SK-N-SH (cell line): ENCODE measurements at regions of chr7 and their contacts with region 1.

Region 1: GRCh38 chr7:100691676-100692577 is 2.1 kb downstream of the GIGYF1 start:
- DNase-seq: peak; percentile 98
- H3K4me3 ChIP-seq: peak overlapping the region; percentile 66 to 87
- H3K27ac ChIP-seq: peak overlapping the region in 1 of 2 experiments; percentile 43; a peak in 2 of 4 replicates
- H3K4me1 ChIP-seq: peaks cover 18 to 23% of the 10 kb centered on the region in 2 experiments
- H3K27me3 ChIP-seq: no peaks in the 10 kb centered on the region
- CTCF ChIP-seq: peak; percentile 98
- EP300 ChIP-seq: no peak
- RAD21 ChIP-seq: peak; percentile 89

Region 2: DNA sequence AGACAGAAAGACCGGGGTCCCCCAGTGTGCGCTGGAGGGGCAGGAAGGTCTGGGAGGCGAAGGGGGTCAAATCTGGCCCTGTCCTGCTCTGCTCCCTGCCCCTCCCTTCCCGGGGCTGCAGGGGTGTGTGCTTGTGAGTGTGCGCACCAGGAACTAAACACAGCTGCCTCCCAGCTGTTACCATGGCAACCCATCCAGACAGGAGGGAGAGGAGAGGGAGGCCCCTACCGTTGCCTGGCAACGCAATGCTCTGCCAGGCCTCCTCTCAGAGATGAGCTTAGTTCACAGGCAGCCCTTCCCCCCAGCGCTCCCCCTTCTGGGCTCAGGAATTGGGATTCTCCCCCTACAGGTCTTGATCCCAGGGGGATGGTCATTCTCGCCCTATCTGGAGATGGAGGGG is 202.1 kb before region 1 on chr7:
- CTCF ChIA-PET with region 1: interaction called, 10 read pairs
- POLR2A ChIA-PET with region 1: no interaction called
- DNase-seq: peak; percentile 100
- H3K4me3 ChIP-seq: no peak overlapping the region
- H3K27ac ChIP-seq: peak overlapping the region in 1 of 2 experiments; percentile 78; a peak in 2 of 4 replicates
- H3K4me1 ChIP-seq: peaks cover 3 to 32% of the 10 kb centered on the region in 2 experiments; a peak in 2 of 4 replicates
- H3K27me3 ChIP-seq: no peaks in the 10 kb centered on the region
- CTCF ChIP-seq: no peak
- EP300 ChIP-seq: peak in 1 of 2 experiments; percentile 17; a peak in 1 of 4 replicates
- RAD21 ChIP-seq: 0 out of 2 replicates have a peak, but pooled peaks have one; percentile 14

Region 3: DNA sequence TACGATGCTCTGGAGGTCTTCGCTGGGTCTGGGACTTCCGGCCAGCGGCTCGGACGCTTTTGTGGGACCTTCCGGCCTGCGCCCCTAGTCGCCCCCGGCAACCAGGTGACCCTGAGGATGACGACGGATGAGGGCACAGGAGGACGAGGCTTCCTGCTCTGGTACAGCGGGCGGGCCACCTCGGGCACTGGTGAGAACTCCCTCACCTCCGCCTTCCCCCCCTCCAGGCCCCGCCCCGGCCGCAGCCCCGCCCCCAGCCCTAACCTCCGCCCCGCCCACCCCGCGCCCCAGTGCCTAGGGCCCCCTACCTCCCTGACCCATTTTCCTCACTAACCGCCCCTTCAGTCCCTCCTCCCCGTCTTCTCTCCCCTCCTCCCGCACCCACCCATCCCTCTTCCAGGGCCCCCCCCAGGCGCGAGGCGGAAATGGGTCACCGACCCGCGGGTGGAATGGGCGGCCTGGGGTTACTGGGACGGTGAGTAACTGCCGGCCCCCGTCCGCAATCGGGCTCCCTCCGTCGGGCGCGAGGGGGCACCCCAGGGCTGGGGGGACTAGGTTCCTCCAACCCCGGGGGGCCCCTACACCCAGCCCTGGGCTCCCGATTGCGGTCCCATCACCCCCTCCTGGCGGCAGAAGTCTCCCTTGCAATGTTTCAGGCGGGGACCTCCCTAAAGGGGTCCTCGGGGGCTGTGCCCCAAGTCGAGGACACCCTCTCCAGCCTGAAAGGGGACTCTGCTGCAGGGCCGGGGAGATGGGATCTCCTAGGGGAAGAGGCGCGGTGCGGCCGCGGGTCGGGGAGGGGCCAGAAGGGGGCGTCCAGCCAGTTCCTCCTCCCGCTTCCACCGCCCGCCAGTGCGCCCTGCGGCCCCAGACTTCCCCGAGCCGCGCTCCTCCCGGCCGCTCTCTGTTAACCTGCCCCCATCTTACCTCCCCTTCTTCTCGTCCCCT is 87.6 kb before region 1 on chr7:
- CTCF ChIA-PET with region 1: interaction called, 38 read pairs
- POLR2A ChIA-PET with region 1: no interaction called
- DNase-seq: peak; percentile 98
- H3K4me3 ChIP-seq: peak overlapping the region; percentile 67 to 76
- H3K27ac ChIP-seq: peak overlapping the region; percentile 69 to 97
- H3K4me1 ChIP-seq: peaks cover 10 to 25% of the 10 kb centered on the region in 2 experiments; a peak in 3 of 4 replicates
- H3K27me3 ChIP-seq: no peaks in the 10 kb centered on the region
- CTCF ChIP-seq: peak; percentile 59
- EP300 ChIP-seq: peak in 1 of 2 experiments; percentile 39; a peak in 1 of 4 replicates
- RAD21 ChIP-seq: no peak

Region 4: DNA sequence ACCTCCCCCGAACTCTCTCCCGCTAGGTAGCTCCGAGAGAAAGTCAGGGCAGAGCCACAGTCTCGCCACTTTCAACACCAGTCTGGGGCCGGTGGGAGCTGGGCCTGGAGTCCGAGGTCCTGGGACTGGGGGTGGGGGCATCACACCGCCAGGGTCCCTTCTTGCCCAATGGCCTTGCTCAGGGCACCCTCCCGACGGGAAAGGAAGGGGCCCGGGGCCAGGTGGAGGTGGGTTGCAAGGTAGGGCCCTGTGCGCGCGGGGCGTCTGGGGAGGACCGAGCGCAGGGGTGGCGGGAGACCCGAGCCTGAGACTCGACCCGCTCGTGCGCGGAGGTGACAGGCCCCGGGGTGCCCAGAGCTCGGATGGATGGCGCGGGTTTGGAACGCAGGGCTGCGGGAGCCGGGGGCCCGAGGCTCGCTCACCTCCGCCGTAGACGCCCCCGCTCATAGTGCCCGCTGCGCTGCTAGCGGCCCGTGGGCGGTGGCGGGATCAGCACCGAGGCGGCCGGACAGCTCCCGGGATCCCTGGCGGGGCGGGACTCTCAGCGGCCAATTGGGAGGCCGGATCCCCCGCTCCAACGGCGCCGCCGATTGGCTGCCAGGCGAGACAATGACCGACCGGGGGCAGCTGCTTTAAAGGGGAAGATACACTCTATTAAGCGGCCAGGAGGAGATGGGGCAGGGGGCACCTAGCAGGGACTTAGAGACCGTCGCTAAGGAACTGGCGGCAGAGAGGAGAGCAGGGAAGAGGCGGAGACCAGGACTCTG is 35.8 kb before region 1 on chr7 and contains the start of gene ACTL6B:
- CTCF ChIA-PET with region 1: interaction called, 36 read pairs
- POLR2A ChIA-PET with region 1: no interaction called
- DNase-seq: peak; percentile 100
- H3K4me3 ChIP-seq: peak within 1 kb of the TSS in 1 of 2 experiments; percentile 46; a peak in 2 of 4 replicates
- H3K27ac ChIP-seq: peak within 1 kb of the TSS in 1 of 2 experiments; percentile 40; a peak in 1 of 4 replicates
- H3K4me1 ChIP-seq: peaks cover 0 to 6% of the 10 kb centered on the region in 2 experiments; a peak in 1 of 4 replicates
- H3K27me3 ChIP-seq: peaks cover 17% of the 10 kb centered on the region; the same call in 1 of the 2 replicates
- CTCF ChIP-seq: no peak
- EP300 ChIP-seq: no peak
- RAD21 ChIP-seq: no peak
- polyA plus RNA-seq, gene ACTL6B: 0.67 and 0.93 TPM in 2 replicates

Region 5: GRCh38 chr7:100680167-100680575 is 11.8 kb before region 1 on chr7:
- CTCF ChIA-PET with region 1: interaction called, 227 read pairs
- POLR2A ChIA-PET with region 1: interaction called, 14 read pairs
- DNase-seq: peak; percentile 44
- H3K4me3 ChIP-seq: no peak overlapping the region
- H3K27ac ChIP-seq: no peak overlapping the region; a peak in 1 of 4 replicates
- H3K4me1 ChIP-seq: peaks cover 0 to 35% of the 10 kb centered on the region in 2 experiments; a peak in 1 of 4 replicates
- H3K27me3 ChIP-seq: no peaks in the 10 kb centered on the region
- CTCF ChIP-seq: no peak
- EP300 ChIP-seq: no peak
- RAD21 ChIP-seq: no peak

Region 6: DNA sequence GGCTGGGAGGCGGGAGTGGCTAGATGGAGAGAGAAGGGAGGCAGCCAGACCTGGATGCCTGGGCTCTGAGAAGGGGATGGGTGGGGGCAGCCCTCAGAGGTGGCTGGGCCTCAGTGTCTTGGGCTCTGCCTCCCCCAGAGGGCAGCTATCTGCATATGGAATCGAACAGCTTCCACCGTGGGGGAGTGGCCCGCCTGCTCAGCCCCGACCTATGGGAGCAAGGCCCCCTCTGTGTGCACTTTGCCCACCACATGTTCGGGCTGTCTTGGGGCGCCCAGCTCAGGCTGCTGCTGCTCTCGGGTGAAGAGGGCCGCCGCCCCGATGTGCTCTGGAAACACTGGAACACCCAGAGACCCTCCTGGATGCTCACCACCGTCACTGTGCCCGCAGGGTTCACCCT is 44.7 kb after region 1 on chr7:
- CTCF ChIA-PET with region 1: no interaction called
- POLR2A ChIA-PET with region 1: no interaction called
- DNase-seq: no peak
- H3K4me3 ChIP-seq: no peak overlapping the region
- H3K27ac ChIP-seq: no peak overlapping the region
- H3K4me1 ChIP-seq: no peaks in the 10 kb centered on the region
- H3K27me3 ChIP-seq: peaks cover 15% of the 10 kb centered on the region; the same call in 1 of the 2 replicates
- CTCF ChIP-seq: no peak
- EP300 ChIP-seq: no peak
- RAD21 ChIP-seq: no peak